Cardiac septum (tissue), 1 donor: ENCODE measurements at regions of chr2 and their contacts with region 1.

Region 1: DNA sequence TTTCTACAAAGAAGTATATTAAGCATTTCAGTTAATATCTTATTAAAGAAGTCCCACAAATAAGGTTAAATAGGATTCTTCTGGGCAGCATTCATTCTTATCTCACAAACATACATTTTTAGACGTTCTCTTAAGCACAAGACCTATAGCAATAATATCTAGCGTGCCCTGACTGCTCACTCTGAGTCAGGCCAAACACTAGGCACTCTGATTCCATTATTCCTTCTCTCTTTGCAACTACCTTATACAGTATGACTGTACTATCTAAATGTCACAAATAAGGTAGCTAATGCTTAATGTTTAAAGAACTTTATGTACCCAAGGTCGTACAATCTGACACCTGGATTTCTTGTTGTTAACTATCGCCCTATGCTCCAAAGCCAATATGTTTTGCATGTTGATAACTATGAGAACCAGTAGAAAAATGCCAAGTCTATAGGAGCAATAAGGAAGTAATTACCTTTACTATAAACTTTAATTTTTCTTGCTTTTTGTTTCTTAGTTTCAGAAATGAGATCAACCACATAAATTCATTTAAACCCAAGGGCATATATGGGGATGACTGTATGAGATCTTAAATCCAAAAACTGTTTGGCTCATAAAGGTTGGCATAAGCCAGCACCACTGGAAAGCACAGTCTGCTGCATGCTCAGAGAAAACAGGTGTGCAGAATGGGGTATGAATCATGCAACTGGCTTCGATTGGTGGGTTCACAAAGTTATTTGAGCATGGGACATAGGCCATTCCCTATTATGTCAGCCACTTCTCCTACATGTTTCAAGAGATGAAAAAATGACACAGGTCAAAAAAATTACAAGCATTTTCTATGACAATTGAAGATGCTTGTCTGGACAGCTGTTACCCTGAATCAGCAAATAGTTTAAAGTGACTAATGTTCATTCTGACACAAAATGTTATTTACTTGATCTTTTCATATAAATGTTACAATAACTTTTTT is 352.0 kb downstream of the IRS1 start:
- DNase-seq: no peak

Region 2: DNA sequence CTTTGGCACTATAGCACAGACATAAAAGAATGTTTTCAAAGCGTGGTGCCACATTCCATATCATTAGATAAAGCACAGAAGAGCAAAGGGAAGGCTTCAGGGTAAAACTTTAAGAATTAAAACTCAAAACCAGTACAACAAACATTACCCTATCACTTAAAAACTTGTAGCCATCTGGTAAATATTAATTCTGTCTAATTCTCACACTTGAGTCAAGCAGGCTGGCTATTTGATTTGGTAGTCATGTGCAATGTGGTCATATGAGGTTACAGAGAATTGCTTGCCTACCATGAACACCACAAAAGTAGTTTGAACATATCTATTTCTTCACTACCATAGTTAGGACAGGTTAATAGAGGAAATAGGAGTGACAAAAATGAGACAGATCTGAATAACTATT is 107.1 kb after region 1 on chr2:
- intact Hi-C with region 1: loop called (anchors 10 kb)
- DNase-seq: no peak

Region 3: DNA sequence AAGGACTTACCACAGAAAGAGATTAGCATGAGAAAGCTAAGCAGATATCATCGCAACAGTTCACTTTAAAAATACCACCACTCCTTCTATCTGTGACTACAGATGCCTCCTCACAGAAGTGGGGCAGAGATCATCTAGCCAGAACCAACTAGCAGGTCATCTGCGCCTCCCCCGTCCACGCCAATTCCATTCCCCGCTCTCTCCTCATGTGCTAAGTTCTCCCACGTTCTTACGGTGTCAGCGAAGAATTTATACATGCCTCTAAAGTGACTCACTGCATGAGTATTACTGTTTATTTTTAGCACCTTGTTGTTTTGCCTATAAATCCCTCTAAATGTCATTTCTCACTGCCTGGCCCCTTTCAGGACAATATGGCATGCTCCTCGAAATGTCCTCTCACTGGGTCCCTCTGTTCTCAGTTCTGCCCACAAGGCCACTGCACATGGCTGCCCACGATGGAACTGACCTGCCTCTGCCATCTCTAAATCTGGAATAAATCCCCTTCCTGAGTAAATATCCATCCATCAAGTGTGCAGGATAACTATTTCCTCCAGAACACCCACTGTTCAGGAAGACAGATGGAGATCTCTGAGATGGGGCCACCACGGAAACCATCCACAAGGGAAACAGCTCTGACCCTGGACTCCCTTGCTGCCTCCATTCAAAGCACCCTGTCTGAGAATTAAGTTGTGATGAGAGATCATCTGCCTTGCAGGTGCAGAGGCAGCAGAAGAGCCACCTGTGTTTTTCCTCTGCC is 214.3 kb after region 1 on chr2:
- intact Hi-C with region 1: loop called (anchors 5 kb)
- DNase-seq: no peak